ENCODE measurements at regions of chr13 and their contacts with region 1.

Region 1: GRCh38 chr13:99442273-99442895 is 58.9 kb upstream of the TM9SF2 start:
- DNase-seq: peak; percentile 59 to 71 (median 64)
- H3K4me3 ChIP-seq: no peak overlapping the region
- H3K4me3 Mint-ChIP-seq: no peak overlapping the region
- H3K27ac ChIP-seq: no peak overlapping the region
- H3K27ac Mint-ChIP-seq: no peak overlapping the region
- H3K4me1 ChIP-seq: no peaks in the 10 kb centered on the region
- H3K4me1 Mint-ChIP-seq: no peaks in the 10 kb centered on the region
- H3K27me3 ChIP-seq: peaks cover 0 to 12% of the 10 kb centered on the region in 2 donors
- H3K27me3 Mint-ChIP-seq: peaks cover 15 to 17% (median 16%) of the 10 kb centered on the region in 3 donors
- CTCF ChIP-seq: peak; percentile 98

Region 2: GRCh38 chr13:99347911-99348451 is 94.4 kb before region 1 on chr13:
- intact Hi-C with region 1: no loop called
- DNase-seq: no peak
- H3K4me3 ChIP-seq: no peak overlapping the region
- H3K4me3 Mint-ChIP-seq: no peak overlapping the region
- H3K27ac ChIP-seq: peak overlapping the region in 1 of 2 donors; percentile 33
- H3K27ac Mint-ChIP-seq: peak overlapping the region in 4 of 7 donors; percentile 4 to 77 (median 48)
- H3K4me1 ChIP-seq: no peaks in the 10 kb centered on the region
- H3K4me1 Mint-ChIP-seq: peaks cover 3% of the 10 kb centered on the region
- H3K27me3 ChIP-seq: no peaks in the 10 kb centered on the region
- H3K27me3 Mint-ChIP-seq: peaks cover 0 to 2% (median 1%) of the 10 kb centered on the region in 3 donors
- CTCF ChIP-seq: no peak

Region 3: GRCh38 chr13:99501184-99501847 is 58.9 kb after region 1 on chr13 and contains the start of gene TM9SF2:
- intact Hi-C with region 1: loop called (anchors 5 kb)
- DNase-seq: peak; percentile 96 to 97 (median 97)
- H3K4me3 ChIP-seq: peak within 1 kb of the TSS; percentile 88 to 98 (median 90)
- H3K4me3 Mint-ChIP-seq: peak within 1 kb of the TSS; percentile 97
- H3K27ac ChIP-seq: peak within 1 kb of the TSS; percentile 90 to 95
- H3K27ac Mint-ChIP-seq: peak within 1 kb of the TSS; percentile 95 to 98 (median 98)
- H3K4me1 ChIP-seq: peaks cover 66 to 84% of the 10 kb centered on the region in 2 donors
- H3K4me1 Mint-ChIP-seq: peaks cover 67% of the 10 kb centered on the region
- H3K27me3 ChIP-seq: no peaks in the 10 kb centered on the region
- H3K27me3 Mint-ChIP-seq: peaks cover 0 to 1% (median 0%) of the 10 kb centered on the region in 3 donors
- CTCF ChIP-seq: no peak
- polyA plus RNA-seq, gene TM9SF2: 54.0 to 255 (median 218) TPM

Region 4: GRCh38 chr13:99617474-99618255 is 175.3 kb after region 1 on chr13:
- intact Hi-C with region 1: loop called in 1 of 2 experiments (anchors 10 kb)
- DNase-seq: peak in 1 of 3 donors; percentile 5
- H3K4me3 ChIP-seq: no peak overlapping the region
- H3K4me3 Mint-ChIP-seq: no peak overlapping the region
- H3K27ac ChIP-seq: no peak overlapping the region
- H3K27ac Mint-ChIP-seq: peak overlapping the region in 1 of 7 donors; percentile 60
- H3K4me1 ChIP-seq: no peaks in the 10 kb centered on the region
- H3K4me1 Mint-ChIP-seq: peaks cover 4% of the 10 kb centered on the region
- H3K27me3 ChIP-seq: no peaks in the 10 kb centered on the region
- H3K27me3 Mint-ChIP-seq: peaks cover 0 to 8% (median 3%) of the 10 kb centered on the region in 3 donors
- CTCF ChIP-seq: peak; percentile 42

Region 5: DNA sequence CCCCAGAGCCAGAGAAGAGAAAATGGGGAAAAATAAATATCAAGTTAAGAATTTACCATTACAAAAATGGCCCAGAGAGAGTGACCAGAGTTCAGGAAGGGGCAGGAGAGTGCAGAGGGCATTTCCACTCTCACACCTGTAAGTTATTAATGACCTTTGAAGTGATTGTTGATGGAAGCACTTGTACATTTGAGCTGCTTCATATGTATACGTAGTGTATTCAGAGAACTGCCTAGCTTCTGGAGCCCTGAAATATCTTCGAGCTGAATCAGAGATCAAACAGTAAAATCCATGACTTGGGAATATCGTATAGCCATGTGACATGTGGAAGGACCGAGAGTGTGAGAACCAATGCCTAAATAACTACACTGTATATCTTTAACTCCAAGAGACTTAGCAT is 597.4 kb after region 1 on chr13:
- intact Hi-C with region 1: no loop called
- DNase-seq: no peak
- H3K4me3 ChIP-seq: no peak overlapping the region
- H3K4me3 Mint-ChIP-seq: no peak overlapping the region
- H3K27ac ChIP-seq: no peak overlapping the region
- H3K27ac Mint-ChIP-seq: no peak overlapping the region
- H3K4me1 ChIP-seq: no peaks in the 10 kb centered on the region
- H3K4me1 Mint-ChIP-seq: no peaks in the 10 kb centered on the region
- H3K27me3 ChIP-seq: no peaks in the 10 kb centered on the region
- H3K27me3 Mint-ChIP-seq: peaks cover 7 to 12% (median 11%) of the 10 kb centered on the region in 3 donors
- CTCF ChIP-seq: no peak